B cell (primary cell): ENCODE measurements at regions of chr18 and their contacts with region 1.

Region 1: DNA sequence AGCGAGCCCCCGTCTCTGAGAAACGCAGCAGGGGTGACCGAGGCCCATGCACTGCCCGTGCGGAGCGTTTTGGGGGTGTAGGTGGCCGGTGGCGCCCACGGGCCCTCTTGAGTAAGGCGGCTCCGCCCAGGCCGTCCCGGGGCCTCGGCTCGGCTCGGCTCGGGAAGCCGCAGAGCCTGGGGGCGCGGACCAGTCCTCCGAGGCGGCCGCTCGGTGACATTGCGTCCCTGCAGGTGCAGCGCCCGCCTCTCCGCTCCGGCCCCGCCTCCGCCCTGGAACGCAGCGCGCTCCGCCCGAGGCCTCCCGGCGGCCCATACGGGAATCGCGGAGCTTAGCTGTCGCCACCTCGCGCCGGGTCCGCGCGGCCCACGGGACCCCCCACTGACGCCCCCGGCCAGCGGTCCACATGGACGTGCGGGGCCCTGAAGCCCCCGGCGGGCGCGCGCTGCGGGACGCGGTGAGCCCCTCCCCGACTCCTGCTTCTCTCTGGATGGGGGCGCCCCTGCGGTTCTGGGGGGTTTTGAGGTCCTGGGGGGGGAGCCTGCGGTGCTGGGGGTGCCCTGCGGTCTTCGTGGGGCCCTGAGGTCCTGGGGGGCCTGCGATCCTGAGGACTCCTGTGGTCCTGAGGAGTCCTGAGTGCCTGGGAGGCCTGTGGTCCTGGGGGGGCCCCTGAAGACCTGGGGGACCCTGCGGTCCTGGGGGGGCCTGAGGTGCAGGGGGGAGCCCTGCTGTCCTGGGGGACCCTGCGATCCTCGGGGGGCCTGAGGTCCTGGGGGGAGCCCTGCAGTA is at the start of gene HSBP1L1:
- DNase-seq: peak; percentile 76
- ATAC-seq: peak; percentile 90
- H3K4me3 ChIP-seq: peak within 1 kb of the TSS in 4 of 5 experiments; percentile 37 to 63 (median 56)
- H3K4me3 Mint-ChIP-seq: peak within 1 kb of the TSS; percentile 74
- H3K27ac ChIP-seq: peak within 1 kb of the TSS in 1 of 2 donors; percentile 41
- H3K27ac Mint-ChIP-seq: peak within 1 kb of the TSS; percentile 77
- H3K4me1 ChIP-seq: peaks cover 23 to 41% of the 10 kb centered on the region in 2 donors
- H3K4me1 Mint-ChIP-seq: peaks cover 39% of the 10 kb centered on the region
- H3K27me3 ChIP-seq: peaks cover 0 to 6% (median 0%) of the 10 kb centered on the region in 4 experiments
- H3K27me3 Mint-ChIP-seq: no peaks in the 10 kb centered on the region
- CTCF ChIP-seq: peak; percentile 23
- total RNA-seq, gene HSBP1L1: 4.8 and 7.2 TPM in 2 replicates

Region 2: GRCh38 chr18:79797518-79798345 is 166.8 kb before region 1 on chr18 and contains the start of gene KCNG2:
- CTCF ChIA-PET with region 1: no interaction called
- POLR2A ChIA-PET with region 1: no interaction called
- intact Hi-C with region 1: loop called (anchors 5 kb)
- DNase-seq: peak; percentile 47
- ATAC-seq: peak; percentile 65
- H3K4me3 ChIP-seq: peak within 1 kb of the TSS in 3 of 5 experiments; percentile 23 to 38 (median 27)
- H3K4me3 Mint-ChIP-seq: peak within 1 kb of the TSS; percentile 88
- H3K27ac ChIP-seq: no peak within 1 kb of the TSS
- H3K27ac Mint-ChIP-seq: peak within 1 kb of the TSS; percentile 17
- H3K4me1 ChIP-seq: peaks cover 29 to 33% of the 10 kb centered on the region in 2 donors
- H3K4me1 Mint-ChIP-seq: peaks cover 26% of the 10 kb centered on the region
- H3K27me3 ChIP-seq: peaks cover 0 to 33% (median 17%) of the 10 kb centered on the region in 4 experiments
- H3K27me3 Mint-ChIP-seq: peaks cover 40% of the 10 kb centered on the region
- CTCF ChIP-seq: no peak
- total RNA-seq, gene KCNG2: not detected in 2 replicates

Region 3: GRCh38 chr18:79951578-79952455 is 12.7 kb before region 1 on chr18 and contains the start of gene SLC66A2:
- CTCF ChIA-PET with region 1: interaction called, 5 read pairs
- POLR2A ChIA-PET with region 1: no interaction called
- intact Hi-C with region 1: loop called (anchors 1 kb)
- DNase-seq: peak; percentile 92
- ATAC-seq: peak; percentile 83
- H3K4me3 ChIP-seq: peak within 1 kb of the TSS; percentile 58 to 73 (median 70)
- H3K4me3 Mint-ChIP-seq: peak within 1 kb of the TSS; percentile 92
- H3K27ac ChIP-seq: peak within 1 kb of the TSS; percentile 54 to 83
- H3K27ac Mint-ChIP-seq: peak within 1 kb of the TSS; percentile 84
- H3K4me1 ChIP-seq: peaks cover 17 to 37% of the 10 kb centered on the region in 2 donors
- H3K4me1 Mint-ChIP-seq: peaks cover 34% of the 10 kb centered on the region
- H3K27me3 ChIP-seq: no peaks in the 10 kb centered on the region
- H3K27me3 Mint-ChIP-seq: no peaks in the 10 kb centered on the region
- CTCF ChIP-seq: no peak
- total RNA-seq, gene SLC66A2: 44.4 and 45.6 TPM in 2 replicates